ENCODE measurements at regions of chr22 and their contacts with region 1.

Region 1: GRCh38 chr22:20909543-20910303 is 7.5 kb upstream of the CRKL start:
- DNase-seq: no peak
- H3K4me3 ChIP-seq: no peak overlapping the region
- H3K27ac ChIP-seq: no peak overlapping the region
- H3K4me1 ChIP-seq: no peaks in the 10 kb centered on the region
- H3K27me3 ChIP-seq: no peaks in the 10 kb centered on the region
- CTCF ChIP-seq: no peak
- POLR2A ChIP-seq: no peak

Region 2: GRCh38 chr22:20859606-20860308 is 50.0 kb before region 1 on chr22:
- intact Hi-C with region 1: loop called (anchors 5 kb)
- DNase-seq: no peak
- H3K4me3 ChIP-seq: peak overlapping the region; percentile 19 to 88 (median 63)
- H3K27ac ChIP-seq: peak overlapping the region in 2 of 3 donors; percentile 66 to 73
- H3K4me1 ChIP-seq: peaks cover 31 to 32% of the 10 kb centered on the region in 2 donors
- H3K27me3 ChIP-seq: no peaks in the 10 kb centered on the region
- CTCF ChIP-seq: no peak
- POLR2A ChIP-seq: no peak

Measured in thyroid gland (tissue), 4 donors.